ENCODE measurements at regions of chr4 and their contacts with region 1.

Region 1: DNA sequence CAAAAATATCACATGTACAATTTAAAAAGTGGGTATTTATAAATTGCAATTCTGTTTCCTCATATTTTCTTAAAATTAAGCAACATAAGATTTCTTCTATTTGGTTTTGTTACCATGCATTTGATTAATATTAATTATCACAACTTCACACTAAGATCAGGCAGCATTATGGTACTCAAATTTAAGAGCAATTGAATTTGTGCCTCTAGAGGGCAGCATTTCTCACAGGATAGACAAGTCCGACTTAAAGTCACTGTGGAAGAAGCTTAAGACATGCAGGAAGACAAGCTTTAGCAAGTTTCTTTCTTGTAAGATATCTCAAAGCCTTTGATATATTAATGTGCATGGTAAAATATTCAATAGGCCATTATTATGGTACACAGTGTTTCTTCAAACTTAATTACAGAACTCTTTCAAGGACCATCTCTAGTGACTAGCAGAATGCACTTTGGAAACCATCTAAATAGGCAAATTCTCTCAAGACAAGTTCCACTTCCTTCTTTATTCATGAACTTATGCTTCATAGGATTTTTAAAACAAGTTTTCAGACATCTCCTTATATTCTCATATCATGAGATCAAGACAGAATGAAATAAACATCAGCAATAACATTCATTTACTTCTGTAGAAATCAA is 35.0 kb downstream of the FBXW7 start:
- DNase-seq: peak; percentile 56 to 78
- H3K4me3 ChIP-seq: no peak overlapping the region
- H3K4me3 Mint-ChIP-seq: no peak overlapping the region
- H3K27ac Mint-ChIP-seq: no peak overlapping the region
- H3K4me1 ChIP-seq: peaks cover 12% of the 10 kb centered on the region
- H3K4me1 Mint-ChIP-seq: peaks cover 13% of the 10 kb centered on the region
- H3K27me3 ChIP-seq: no peaks in the 10 kb centered on the region
- H3K27me3 Mint-ChIP-seq: no peaks in the 10 kb centered on the region
- CTCF ChIP-seq: peak; percentile 58 to 75

Region 2: DNA sequence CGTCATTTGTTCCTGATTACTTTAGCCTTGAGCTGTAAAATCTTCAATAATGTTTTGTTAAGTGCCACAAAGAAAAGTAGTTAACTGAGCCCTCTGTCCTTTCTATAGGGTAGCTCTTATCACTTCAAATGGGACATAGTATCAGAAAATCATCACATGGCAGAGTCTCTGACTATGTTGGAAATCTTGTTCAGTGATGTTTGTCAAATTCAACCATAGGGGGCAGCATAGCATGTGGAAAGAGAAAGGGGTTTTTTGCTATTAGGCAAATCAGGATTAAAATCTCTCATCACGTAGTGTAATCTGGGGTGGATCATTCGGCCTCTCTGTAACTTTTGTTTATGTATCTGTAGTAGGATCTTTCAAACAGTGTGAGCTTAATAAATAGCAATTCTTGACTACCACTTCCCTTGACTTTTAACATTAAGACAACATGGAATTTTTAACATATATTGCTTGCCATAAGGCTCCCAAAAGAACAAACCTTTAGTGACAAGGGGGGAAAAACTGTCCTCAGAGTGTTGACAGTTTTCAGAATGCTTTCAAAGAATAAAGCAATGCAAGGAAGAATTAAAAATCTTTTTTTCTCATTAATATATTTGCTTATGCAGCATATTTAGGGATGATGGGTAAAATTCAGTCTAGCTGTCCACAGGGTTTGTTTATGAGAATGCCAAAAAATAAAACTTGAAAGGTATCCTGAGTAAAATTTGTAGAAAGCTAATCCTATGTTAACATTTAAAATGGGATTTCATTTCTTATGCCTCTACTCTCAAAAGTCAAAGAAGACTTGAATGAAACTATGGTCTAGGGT is 92.2 kb before region 1 on chr4:
- CTCF ChIA-PET with region 1: no interaction called
- POLR2A ChIA-PET with region 1: no interaction called
- intact Hi-C with region 1: loop called (anchors 5 kb)
- DNase-seq: peak in 1 of 2 experiments; percentile 56
- H3K4me3 ChIP-seq: no peak overlapping the region
- H3K4me3 Mint-ChIP-seq: no peak overlapping the region
- H3K27ac Mint-ChIP-seq: no peak overlapping the region
- H3K4me1 ChIP-seq: 0 out of 2 replicates have a peak, but pooled peaks cover 1% of the 10 kb centered on the region
- H3K4me1 Mint-ChIP-seq: no peaks in the 10 kb centered on the region
- H3K27me3 ChIP-seq: no peaks in the 10 kb centered on the region
- H3K27me3 Mint-ChIP-seq: no peaks in the 10 kb centered on the region
- CTCF ChIP-seq: peak; percentile 54 to 55

Region 3: GRCh38 chr4:152454398-152455011 is 46.4 kb before region 1 on chr4:
- CTCF ChIA-PET with region 1: interaction called, 9 read pairs
- POLR2A ChIA-PET with region 1: no interaction called
- intact Hi-C with region 1: loop called (anchors 2 kb)
- DNase-seq: no peak
- H3K4me3 ChIP-seq: no peak overlapping the region
- H3K4me3 Mint-ChIP-seq: no peak overlapping the region
- H3K27ac Mint-ChIP-seq: no peak overlapping the region
- H3K4me1 ChIP-seq: peaks cover 6% of the 10 kb centered on the region; the same call in 1 of the 2 replicates
- H3K4me1 Mint-ChIP-seq: peaks cover 20% of the 10 kb centered on the region
- H3K27me3 ChIP-seq: no peaks in the 10 kb centered on the region
- H3K27me3 Mint-ChIP-seq: no peaks in the 10 kb centered on the region
- CTCF ChIP-seq: peak; percentile 31 to 57

Region 4: DNA sequence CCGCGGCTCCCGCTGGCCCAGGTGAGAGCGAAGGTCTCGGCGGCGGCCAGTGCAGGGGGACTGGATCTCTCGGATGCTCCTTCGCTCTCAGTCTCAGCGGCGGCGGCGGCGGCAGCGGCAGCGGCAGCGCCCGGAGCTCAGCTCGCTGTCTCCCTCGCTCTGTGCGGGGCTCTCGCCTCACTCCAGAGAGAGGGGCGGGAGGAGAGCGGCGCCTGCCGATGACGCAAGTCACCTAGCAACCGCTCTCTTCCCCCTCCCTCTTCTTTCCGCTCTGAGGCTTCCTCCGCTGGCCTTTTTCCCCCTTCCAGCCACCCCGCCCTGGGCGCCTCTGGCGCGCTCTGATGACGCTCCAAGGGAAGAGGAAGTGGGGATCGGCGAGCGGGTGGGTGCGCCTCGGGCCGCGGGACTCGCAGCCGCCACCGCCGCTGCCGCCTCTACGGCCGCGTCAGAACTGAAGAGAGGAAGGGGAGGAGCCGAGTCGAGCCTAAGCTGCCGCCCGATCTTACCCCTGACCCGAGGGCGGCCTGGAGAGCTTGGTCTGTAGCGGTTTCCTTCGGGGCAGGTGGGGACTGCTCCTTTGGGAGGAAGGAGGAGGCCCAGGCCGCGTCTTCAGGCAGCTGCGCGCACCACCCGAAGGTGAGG is 35.1 kb after region 1 on chr4 and contains the start of gene FBXW7:
- CTCF ChIA-PET with region 1: interaction called, 10 read pairs
- POLR2A ChIA-PET with region 1: interaction called, 3 read pairs
- intact Hi-C with region 1: loop called (anchors 5 kb)
- DNase-seq: peak; percentile 99
- H3K4me3 ChIP-seq: peak within 1 kb of the TSS; percentile 93
- H3K4me3 Mint-ChIP-seq: peak within 1 kb of the TSS; percentile 98
- H3K27ac Mint-ChIP-seq: peak within 1 kb of the TSS; percentile 97
- H3K4me1 ChIP-seq: peaks cover 11% of the 10 kb centered on the region
- H3K4me1 Mint-ChIP-seq: peaks cover 16% of the 10 kb centered on the region
- H3K27me3 ChIP-seq: no peaks in the 10 kb centered on the region
- H3K27me3 Mint-ChIP-seq: no peaks in the 10 kb centered on the region
- CTCF ChIP-seq: no peak
- total RNA-seq, gene FBXW7: 34.1 and 36.1 TPM in 2 replicates

Region 5: GRCh38 chr4:152735396-152735859 is 234.5 kb after region 1 on chr4:
- CTCF ChIA-PET with region 1: interaction called, 6 read pairs
- POLR2A ChIA-PET with region 1: no interaction called
- intact Hi-C with region 1: loop called (anchors 2 kb)
- DNase-seq: no peak
- H3K4me3 ChIP-seq: no peak overlapping the region
- H3K4me3 Mint-ChIP-seq: no peak overlapping the region
- H3K27ac Mint-ChIP-seq: no peak overlapping the region
- H3K4me1 ChIP-seq: 0 out of 2 replicates have a peak, but pooled peaks cover 4% of the 10 kb centered on the region
- H3K4me1 Mint-ChIP-seq: peaks cover 9% of the 10 kb centered on the region
- H3K27me3 ChIP-seq: no peaks in the 10 kb centered on the region
- H3K27me3 Mint-ChIP-seq: no peaks in the 10 kb centered on the region
- CTCF ChIP-seq: peak; percentile 45 to 47

Measured in Caco-2 (cell line).